ENCODE measurements at regions of chr14 and their contacts with region 1.

Region 1: DNA sequence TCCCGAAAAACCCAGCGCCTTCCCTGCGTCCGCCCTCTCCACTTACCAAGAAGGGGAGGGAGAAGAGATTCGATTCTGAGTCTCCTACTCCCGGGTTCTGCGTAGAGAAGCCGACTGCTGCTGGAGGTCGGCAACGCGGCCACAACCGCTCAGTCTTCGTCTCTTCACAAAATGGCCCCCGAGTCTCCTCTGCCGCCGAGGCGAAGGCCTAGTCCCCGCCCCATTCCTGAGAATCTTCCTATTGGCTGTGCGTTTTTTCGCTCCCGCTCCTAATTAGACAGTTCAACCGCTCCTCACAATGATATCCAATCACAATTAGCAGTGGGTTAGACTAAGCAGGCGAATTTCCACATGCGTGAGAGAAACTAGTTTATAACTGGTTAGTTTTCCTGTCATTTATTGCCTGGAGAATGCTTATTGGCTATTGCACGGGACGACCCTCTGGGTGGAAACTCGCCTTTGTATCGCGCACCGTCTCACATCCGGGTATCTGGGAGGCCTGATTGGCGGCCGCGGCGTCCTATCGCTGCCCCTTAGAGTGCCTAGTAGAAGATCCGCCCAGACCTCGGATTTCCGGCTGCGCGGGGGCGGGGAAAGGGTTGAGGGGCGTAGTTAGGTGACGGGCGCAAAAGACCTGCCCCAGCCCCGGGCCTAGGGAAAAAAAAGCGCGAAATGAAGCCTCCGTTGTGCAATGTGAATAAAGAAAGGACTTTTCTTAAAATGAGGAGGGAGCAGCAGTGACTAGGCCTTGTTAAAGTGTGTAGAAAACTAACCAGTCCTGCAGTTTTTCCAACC is at the start of gene HNRNPC:
- DNase-seq: peak; percentile 100
- total RNA-seq, gene HNRNPC: 239 to 283 TPM

Region 2: GRCh38 chr14:21233457-21234076 is 35.9 kb before region 1 on chr14:
- intact Hi-C with region 1: loop called in 1 of 2 experiments (anchors 5 kb)
- DNase-seq: no peak

Region 3: DNA sequence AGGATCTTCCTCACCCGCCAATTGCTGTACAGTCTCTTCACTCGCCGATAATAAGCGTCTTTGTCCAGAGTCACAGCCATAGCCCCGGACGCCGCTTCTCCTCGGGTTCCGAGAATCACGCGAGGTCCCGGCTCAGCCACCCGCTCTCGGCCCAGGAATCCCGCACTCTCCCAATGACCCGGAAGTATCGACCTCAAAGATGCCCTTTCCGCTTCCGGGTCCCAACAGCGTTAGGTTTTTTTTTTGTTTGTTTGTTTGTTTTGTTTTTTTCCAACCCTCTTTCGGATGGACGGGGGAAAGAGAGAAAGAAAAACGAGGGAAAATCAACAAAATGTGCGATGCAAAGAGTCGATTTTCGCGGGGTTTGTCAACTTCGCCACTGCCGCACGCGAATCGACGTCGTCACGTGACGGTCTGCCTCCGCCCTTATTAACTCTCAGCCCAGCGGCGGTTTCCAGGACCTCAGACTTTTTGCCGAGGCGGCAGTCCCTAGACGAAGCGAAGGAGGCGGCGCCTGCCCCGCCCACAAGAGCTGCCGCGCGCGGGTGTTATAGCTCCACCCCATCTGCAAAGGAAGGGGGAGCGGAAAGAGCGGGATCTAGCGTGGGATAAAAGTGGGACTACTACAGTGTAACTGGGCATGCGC is 114.5 kb after region 1 on chr14 and contains the start of gene SUPT16H:
- intact Hi-C with region 1: loop called (anchors 10 kb)
- DNase-seq: peak; percentile 99
- total RNA-seq, gene SUPT16H: 47.9 to 56.5 TPM

Region 4: DNA sequence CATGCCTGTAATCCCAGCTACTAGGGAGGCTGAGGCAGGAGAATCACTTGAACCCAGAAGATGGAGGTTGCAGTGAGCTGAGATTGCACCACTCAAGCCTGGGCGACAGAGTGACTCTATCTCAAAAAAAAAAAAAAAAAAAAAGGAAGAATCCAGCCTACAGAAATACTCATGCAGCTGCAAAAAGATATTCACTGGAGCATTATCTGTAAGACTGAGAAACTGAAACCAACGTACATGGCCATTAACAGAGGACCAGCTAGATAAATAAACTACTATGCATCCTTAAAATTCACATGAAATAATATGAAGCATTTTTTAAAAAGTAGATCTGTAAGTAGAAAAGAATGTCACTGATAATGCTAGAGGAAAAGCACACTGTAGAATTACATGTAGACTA is 1542.3 kb after region 1 on chr14:
- intact Hi-C with region 1: no loop called
- DNase-seq: no peak